Thyroid gland (tissue), 4 donors: ENCODE measurements at regions of chr3 and their contacts with region 1.

Region 1: DNA sequence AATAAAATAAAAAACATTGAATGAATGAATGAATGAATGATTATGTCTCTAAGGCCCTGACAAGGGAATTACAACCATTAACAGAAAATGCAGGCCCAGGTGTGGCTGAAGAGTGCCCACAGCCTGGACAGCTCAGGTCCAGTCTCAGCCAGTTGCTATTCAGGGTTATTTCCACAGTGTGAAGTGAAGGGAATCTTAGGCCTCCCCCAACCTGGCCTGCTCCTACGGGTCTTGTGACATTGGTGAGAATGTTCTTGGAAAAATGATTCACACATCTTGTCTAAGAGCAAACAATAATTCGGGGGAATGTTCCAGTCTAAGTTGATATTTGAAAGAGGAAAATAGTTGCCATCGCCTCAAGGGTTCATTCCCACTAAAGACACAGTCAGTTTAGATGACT is 37.0 kb downstream of the MINDY4B start:
- DNase-seq: peak; percentile 21 to 72
- H3K4me3 ChIP-seq: no peak overlapping the region
- H3K27ac ChIP-seq: peak overlapping the region in 2 of 3 donors; percentile 33 to 40
- H3K4me1 ChIP-seq: peaks cover 0 to 15% of the 10 kb centered on the region in 2 donors
- H3K27me3 ChIP-seq: no peaks in the 10 kb centered on the region
- CTCF ChIP-seq: no peak
- POLR2A ChIP-seq: no peak

Region 2: DNA sequence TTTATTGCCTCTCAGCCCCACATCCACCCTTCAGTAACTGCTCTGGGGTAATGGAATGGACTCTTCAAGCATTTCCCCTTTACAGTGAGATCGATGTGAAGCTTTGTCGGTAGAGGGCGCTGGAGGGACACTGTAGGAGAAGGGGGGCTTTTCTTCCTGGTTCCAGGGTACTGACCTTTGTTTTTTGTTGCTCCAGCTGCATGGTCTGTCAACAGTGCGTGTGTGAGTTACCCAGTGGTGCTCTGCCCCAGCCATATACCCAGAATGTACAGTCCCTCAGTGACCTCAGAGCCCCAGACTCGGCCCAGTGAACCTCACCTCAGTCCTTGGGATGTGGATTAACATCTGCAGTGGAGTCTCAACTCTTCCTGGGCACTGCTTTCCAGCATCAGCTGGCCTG is 640.4 kb before region 1 on chr3:
- intact Hi-C with region 1: no loop called
- DNase-seq: peak; percentile 68 to 75
- H3K4me3 ChIP-seq: no peak overlapping the region
- H3K27ac ChIP-seq: no peak overlapping the region
- H3K4me1 ChIP-seq: no peaks in the 10 kb centered on the region
- H3K27me3 ChIP-seq: no peaks in the 10 kb centered on the region
- CTCF ChIP-seq: peak; percentile 52 to 89 (median 74)
- POLR2A ChIP-seq: no peak

Region 3: GRCh38 chr3:150721285-150722130 is 146.8 kb before region 1 on chr3:
- intact Hi-C with region 1: loop called (anchors 5 kb)
- DNase-seq: peak; percentile 21 to 30
- H3K4me3 ChIP-seq: no peak overlapping the region
- H3K27ac ChIP-seq: no peak overlapping the region
- H3K4me1 ChIP-seq: peaks cover 0 to 4% of the 10 kb centered on the region in 2 donors
- H3K27me3 ChIP-seq: no peaks in the 10 kb centered on the region
- CTCF ChIP-seq: peak; percentile 57 to 91 (median 81)
- POLR2A ChIP-seq: no peak